Right lobe of liver (tissue), 6 donors: ENCODE measurements at regions of chr9 and their contacts with region 1.

Region 1: GRCh38 chr9:129776938-129777768 is 24.3 kb upstream of the PTGES start:
- DNase-seq: peak; percentile 67 to 83 (median 79)
- ATAC-seq: peak; percentile 69 to 85 (median 77)
- H3K4me3 ChIP-seq: no peak overlapping the region
- H3K27ac ChIP-seq: peak overlapping the region in 1 of 3 donors; percentile 33
- H3K4me1 ChIP-seq: no peaks in the 10 kb centered on the region
- H3K27me3 ChIP-seq: no peaks in the 10 kb centered on the region
- CTCF ChIP-seq: no peak
- POLR2A ChIP-seq: no peak

Region 2: DNA sequence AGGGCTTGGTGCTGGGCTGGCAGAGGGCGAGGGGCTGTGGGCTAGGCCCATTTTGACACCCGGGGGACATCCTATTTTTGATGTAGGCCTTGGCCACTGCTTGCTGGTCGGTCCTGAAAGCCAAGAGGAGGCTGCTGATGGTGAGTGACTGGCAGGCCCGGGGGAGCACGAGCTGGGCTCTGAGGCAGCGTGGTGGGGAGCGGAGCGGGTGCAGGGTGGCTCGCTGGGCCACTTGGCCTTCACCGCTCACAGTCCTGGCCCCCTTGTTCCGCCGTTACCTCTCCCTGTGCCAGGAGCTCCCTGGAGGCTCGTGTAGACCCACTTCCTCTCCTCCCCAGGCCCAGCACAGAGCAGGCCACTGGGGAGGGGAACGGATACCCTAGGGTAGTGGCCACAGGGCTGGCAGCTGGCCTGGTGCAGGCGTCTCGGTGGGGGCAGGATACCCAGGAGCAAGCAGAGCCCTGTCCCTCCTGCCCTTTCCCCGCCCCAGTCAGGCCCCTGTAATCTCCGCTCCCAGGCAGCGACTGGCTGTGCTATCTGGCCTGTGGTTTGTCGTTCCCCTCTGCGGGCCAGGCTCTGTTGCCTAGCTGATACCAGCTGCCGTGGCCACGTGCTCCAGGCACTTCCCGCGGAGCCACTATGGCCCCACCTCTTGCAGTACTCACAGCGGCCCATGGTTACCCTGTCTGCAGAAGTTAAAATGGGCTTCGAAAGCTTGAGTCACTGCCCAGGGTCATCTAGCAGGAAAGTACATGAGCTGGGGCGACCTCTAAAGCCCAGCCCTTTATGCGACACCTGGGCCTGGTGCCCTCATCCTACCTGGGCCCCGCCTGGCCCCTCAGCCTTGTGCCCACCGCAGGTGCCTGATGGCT is 707.9 kb before region 1 on chr9:
- intact Hi-C with region 1: no loop called
- DNase-seq: peak; percentile 87 to 94 (median 93)
- ATAC-seq: peak; percentile 78 to 84 (median 80)
- H3K4me3 ChIP-seq: no peak overlapping the region
- H3K27ac ChIP-seq: peak overlapping the region; percentile 62 to 98 (median 94)
- H3K4me1 ChIP-seq: peaks cover 0 to 52% (median 21%) of the 10 kb centered on the region in 4 donors
- H3K27me3 ChIP-seq: no peaks in the 10 kb centered on the region
- CTCF ChIP-seq: peak in 1 of 4 donors; percentile 14
- POLR2A ChIP-seq: peak; percentile 52

Region 3: GRCh38 chr9:129139993-129140396 is 637.2 kb before region 1 on chr9:
- intact Hi-C with region 1: loop called in 1 of 2 experiments (anchors 10 kb)
- DNase-seq: peak; percentile 83 to 89 (median 87)
- ATAC-seq: peak; percentile 59 to 68 (median 64)
- H3K4me3 ChIP-seq: peak overlapping the region; percentile 53 to 68 (median 56)
- H3K27ac ChIP-seq: peak overlapping the region; percentile 95 to 100 (median 99)
- H3K4me1 ChIP-seq: peaks cover 0 to 62% (median 33%) of the 10 kb centered on the region in 4 donors
- H3K27me3 ChIP-seq: no peaks in the 10 kb centered on the region
- CTCF ChIP-seq: no peak
- POLR2A ChIP-seq: peak; percentile 87

Region 4: DNA sequence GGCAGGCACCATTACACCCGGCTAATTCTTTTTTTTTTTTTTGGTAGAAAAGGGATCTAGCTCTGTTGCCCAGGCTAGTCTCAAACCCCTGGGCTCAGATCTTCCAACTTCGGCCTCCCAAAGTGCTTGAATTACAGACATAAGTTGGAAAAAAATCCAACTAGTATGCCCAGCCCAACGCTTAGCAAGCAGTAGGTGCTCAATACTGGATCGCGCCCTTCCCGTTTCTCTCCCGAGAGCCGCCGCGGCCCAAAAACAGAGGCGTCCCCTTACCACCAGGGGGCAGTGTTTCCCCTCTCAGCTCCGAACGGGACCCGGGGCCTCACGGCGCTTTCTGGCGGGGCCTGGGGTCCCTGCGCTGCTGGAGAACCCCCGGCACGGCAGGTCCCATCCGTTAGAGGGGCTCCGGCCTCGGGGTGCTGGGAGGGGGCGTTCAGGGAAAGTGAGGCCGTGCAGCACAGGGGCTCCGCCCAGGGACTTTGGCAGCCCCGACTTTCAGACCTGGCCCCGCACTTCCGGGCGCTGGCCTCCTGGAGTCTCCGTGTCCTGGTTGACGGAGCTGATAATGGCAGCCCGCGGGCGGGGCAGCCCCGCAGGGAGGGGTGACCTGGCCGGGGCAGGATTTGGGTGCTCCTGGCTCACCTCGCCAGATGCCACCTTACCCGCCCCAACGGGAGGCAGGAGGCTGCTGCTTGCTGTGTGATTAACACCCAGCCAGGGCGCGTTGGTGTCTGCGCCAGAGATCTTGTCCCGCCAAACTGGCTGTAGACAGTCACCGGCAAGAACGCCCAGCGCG is 39.5 kb before region 1 on chr9:
- intact Hi-C with region 1: loop called (anchors 5 kb)
- DNase-seq: peak; percentile 86
- ATAC-seq: peak; percentile 93 to 98 (median 96)
- H3K4me3 ChIP-seq: peak overlapping the region; percentile 61 to 72 (median 66)
- H3K27ac ChIP-seq: peak overlapping the region; percentile 32 to 60 (median 37)
- H3K4me1 ChIP-seq: no peaks in the 10 kb centered on the region
- H3K27me3 ChIP-seq: no peaks in the 10 kb centered on the region
- CTCF ChIP-seq: peak; percentile 94 to 99 (median 98)
- POLR2A ChIP-seq: no peak